Uterus (tissue), 4 donors: ENCODE measurements at regions of chr1 and their contacts with region 1.

Region 1: DNA sequence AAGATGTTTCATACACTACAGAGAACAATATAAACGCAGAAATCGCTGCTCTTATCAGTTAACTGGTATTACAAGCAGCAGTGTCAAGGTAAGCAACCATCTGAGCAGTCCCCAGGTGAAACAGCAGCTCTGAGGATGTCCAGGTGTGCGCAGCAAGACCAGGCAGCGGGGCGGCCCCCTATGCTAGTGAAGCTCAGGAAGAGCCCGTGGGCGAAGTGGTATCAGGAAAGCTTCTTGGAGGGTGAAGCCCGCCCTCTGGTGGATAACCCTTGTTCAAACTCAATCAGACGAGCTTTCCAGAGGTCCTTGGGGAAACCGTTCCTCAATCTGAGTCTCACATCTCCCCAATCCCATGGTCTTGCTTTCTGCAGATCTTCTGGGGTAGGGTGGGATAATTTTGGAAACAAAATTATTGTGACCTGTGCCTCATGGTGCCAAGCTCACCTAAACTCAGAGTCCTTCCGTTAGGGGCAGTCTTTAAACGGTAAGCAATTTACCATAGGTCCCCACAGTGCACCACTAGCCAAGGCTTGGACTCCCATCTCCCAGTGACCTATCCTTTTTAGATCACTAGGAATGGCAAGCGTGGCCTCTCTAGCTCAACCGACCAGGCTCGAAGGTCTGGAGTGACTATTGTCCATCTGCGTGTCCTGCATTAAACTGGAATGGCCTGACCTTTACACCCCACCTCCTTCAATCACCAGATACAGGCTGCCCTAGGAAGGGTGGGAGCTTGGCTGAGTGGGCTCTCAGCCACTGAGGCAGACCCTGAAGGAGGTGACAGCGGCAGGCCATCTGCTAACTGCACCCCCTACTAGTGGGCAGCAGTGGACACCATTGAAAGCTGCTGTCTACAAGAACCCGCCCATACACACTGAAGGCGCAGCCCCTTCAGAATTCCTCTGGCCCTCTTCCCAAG is 13.6 kb upstream of the FAM110D start:
- DNase-seq: peak; percentile 68 to 82
- H3K4me3 ChIP-seq: no peak overlapping the region
- H3K27ac ChIP-seq: no peak overlapping the region
- H3K4me1 ChIP-seq: no peaks in the 10 kb centered on the region
- H3K27me3 ChIP-seq: no peaks in the 10 kb centered on the region
- CTCF ChIP-seq: peak; percentile 76 to 81 (median 76)
- POLR2A ChIP-seq: no peak

Region 2: DNA sequence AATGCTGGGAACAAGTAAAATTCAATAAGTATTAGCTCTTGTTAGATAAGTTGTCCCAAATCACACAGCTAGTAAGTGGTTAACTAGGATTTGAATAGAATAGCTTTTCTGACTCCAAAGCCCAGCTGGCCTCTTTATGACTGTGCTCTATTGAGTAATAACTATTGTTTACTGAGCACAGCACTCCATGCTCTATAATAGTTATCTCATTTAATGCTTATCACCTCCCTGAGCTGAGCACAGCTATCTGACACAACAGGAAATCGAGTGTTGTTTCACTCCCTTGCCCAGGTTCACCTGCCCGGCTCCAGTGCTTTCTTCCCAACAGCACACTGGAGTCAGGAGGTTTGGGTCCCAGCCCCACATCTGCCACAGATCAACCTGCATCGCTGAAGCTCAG is 200.3 kb before region 1 on chr1:
- intact Hi-C with region 1: no loop called
- DNase-seq: no peak
- H3K4me3 ChIP-seq: no peak overlapping the region
- H3K27ac ChIP-seq: no peak overlapping the region
- H3K4me1 ChIP-seq: no peaks in the 10 kb centered on the region
- H3K27me3 ChIP-seq: no peaks in the 10 kb centered on the region
- CTCF ChIP-seq: no peak
- POLR2A ChIP-seq: no peak

Region 3: DNA sequence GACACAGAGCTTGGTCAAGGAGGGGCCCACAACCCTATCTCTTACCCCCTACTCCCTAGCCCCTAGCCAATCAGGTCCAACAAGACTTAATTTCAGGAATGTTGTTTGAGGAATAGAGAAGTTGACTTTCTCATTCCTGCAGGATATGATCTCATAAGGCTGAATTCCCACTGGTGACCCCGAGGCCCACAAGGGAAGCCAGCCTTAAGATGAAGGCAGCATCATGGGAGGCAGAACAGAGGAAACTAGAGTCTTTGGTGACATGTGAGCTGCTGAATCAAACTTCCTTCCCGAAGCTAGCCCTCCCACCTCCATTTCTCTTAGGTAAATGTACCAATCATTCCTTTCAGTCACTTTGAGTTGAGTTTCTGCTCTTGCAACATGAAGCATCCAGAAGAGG is 42.8 kb before region 1 on chr1:
- intact Hi-C with region 1: loop called (anchors 2 kb)
- DNase-seq: no peak
- H3K4me3 ChIP-seq: no peak overlapping the region
- H3K27ac ChIP-seq: no peak overlapping the region
- H3K4me1 ChIP-seq: no peaks in the 10 kb centered on the region
- H3K27me3 ChIP-seq: no peaks in the 10 kb centered on the region
- CTCF ChIP-seq: no peak
- POLR2A ChIP-seq: no peak